Mammary epithelial cell (primary cell): ENCODE measurements at regions of chr12 and their contacts with region 1.

Region 1: DNA sequence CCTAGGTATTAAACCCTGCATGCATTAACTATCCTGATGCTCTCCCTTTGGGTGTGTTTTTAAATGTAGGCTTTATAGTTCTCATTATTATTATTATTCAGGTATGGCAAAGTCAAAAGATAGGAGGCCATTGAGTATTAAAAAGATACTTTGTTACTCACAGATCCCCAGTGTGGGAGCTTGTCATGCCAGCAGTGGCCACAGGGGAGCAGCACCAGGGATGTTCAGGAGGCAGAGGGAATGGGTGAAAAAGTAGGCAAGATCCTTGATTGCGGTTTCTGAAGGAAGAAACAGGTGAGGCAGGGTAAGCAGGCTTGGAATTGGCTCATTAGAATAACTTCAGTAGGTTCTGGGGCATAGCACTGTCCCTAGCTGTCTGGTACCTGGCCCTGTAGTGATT is 382.2 kb downstream of the MED13L start:
- DNase-seq: no peak
- H3K4me3 ChIP-seq: no peak overlapping the region
- H3K27ac ChIP-seq: no peak overlapping the region
- H3K4me1 ChIP-seq: no peaks in the 10 kb centered on the region
- H3K27me3 ChIP-seq: peaks cover 2% of the 10 kb centered on the region
- CTCF ChIP-seq: peak; percentile 32 to 56

Region 2: GRCh38 chr12:114611145-114612018 is 1283.9 kb before region 1 on chr12:
- CTCF ChIA-PET with region 1: no interaction called
- dilution Hi-C with region 1: loop called (anchors 25 kb)
- in situ Hi-C with region 1: no loop called
- intact Hi-C with region 1: no loop called
- DNase-seq: no peak
- H3K4me3 ChIP-seq: no peak overlapping the region
- H3K27ac ChIP-seq: no peak overlapping the region
- H3K4me1 ChIP-seq: no peaks in the 10 kb centered on the region
- H3K27me3 ChIP-seq: no peaks in the 10 kb centered on the region
- CTCF ChIP-seq: no peak

Region 3: GRCh38 chr12:115687094-115687493 is 208.2 kb before region 1 on chr12:
- CTCF ChIA-PET with region 1: interaction called, 20 read pairs
- dilution Hi-C with region 1: no loop called
- in situ Hi-C with region 1: no loop called
- intact Hi-C with region 1: no loop called
- DNase-seq: no peak
- H3K4me3 ChIP-seq: no peak overlapping the region
- H3K27ac ChIP-seq: no peak overlapping the region
- H3K4me1 ChIP-seq: no peaks in the 10 kb centered on the region
- H3K27me3 ChIP-seq: no peaks in the 10 kb centered on the region
- CTCF ChIP-seq: no peak

Region 4: GRCh38 chr12:115943630-115944391 is 48.6 kb after region 1 on chr12:
- CTCF ChIA-PET with region 1: no interaction called
- dilution Hi-C with region 1: no loop called
- in situ Hi-C with region 1: no loop called
- intact Hi-C with region 1: no loop called
- DNase-seq: no peak
- H3K4me3 ChIP-seq: no peak overlapping the region
- H3K27ac ChIP-seq: no peak overlapping the region
- H3K4me1 ChIP-seq: no peaks in the 10 kb centered on the region
- H3K27me3 ChIP-seq: no peaks in the 10 kb centered on the region
- CTCF ChIP-seq: no peak